ENCODE measurements at regions of chr11 and their contacts with region 1.

Region 1: GRCh38 chr11:71120490-71120896 is 131.9 kb downstream of the SHANK2 start:
- DNase-seq: peak; percentile 84
- ATAC-seq: peak; percentile 98
- H3K4me3 Mint-ChIP-seq: no peak overlapping the region
- H3K27ac Mint-ChIP-seq: peak overlapping the region; percentile 84
- H3K4me1 Mint-ChIP-seq: peaks cover 23% of the 10 kb centered on the region
- H3K27me3 Mint-ChIP-seq: no peaks in the 10 kb centered on the region
- CTCF ChIP-seq: no peak

Region 2: DNA sequence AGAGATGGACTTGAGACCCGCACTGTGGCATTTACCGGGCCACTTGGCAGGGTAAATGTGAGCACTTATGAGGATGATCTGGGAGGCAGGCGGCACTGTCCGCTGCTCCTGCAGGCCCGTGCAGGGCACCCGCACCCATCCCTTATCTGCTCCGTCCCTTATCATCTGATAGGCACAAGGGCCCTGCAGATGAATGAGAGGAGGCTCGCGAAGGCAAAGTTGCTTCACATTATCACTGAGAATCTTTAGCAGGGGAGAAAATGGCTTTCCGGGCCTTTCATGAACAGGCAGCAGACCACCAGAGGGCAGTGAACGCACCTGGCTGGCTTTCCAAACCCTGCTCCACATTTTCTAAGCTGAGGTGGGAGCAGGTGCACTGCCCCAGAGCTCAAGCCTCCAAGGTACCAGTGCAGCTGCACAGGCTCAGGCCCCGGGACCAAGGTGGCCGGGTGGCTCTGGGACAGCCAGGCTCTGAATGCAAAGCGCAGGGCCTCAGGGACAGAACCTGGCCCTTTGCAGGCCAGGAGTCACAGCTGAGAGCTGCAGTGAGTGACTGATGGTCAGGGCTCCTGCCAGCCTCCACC is 33.7 kb before region 1 on chr11:
- CTCF ChIA-PET with region 1: interaction called, 18 read pairs
- POLR2A ChIA-PET with region 1: no interaction called
- DNase-seq: peak; percentile 76
- ATAC-seq: peak; percentile 93
- H3K4me3 Mint-ChIP-seq: no peak overlapping the region
- H3K27ac Mint-ChIP-seq: peak overlapping the region; percentile 45; the same call in 1 of the 2 replicates
- H3K4me1 Mint-ChIP-seq: no peaks in the 10 kb centered on the region
- H3K27me3 Mint-ChIP-seq: no peaks in the 10 kb centered on the region
- CTCF ChIP-seq: no peak; the same call in 1 of the 2 replicates

Region 3: DNA sequence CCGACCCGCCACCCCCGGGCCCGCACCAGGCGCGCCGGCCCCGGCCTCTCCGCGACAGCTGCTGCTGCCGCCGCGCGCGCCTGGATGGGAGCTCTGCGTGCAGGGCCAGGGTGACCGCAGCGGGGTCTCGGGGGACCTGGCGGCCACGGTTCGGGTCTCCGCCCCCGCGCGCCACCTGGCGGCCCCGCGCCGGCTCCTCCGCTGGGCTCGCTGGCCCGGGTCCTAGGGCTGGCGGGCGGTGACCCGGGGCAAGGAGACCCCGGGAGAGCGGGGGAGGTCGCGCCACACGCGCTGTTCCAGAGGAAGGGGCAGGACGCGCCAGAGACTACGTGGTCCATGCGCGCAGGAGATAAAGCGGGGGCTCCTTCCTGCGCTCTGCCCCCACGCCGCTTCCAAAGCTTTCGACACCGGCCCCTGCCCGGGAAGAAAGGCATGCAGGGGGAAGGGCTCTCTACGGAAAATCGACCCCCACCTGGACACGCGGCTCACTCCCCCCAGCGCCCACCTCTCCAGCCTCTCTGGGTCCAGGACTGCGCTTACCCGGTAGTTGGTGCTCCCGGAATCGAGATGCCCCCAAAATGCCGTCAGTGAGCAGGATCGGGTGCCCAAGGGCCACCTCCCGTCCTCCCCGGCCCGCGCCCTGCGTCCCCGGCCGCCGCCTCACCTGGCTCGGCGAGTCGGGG is 131.4 kb after region 1 on chr11:
- CTCF ChIA-PET with region 1: interaction called, 84 read pairs
- POLR2A ChIA-PET with region 1: interaction called, 4 read pairs
- DNase-seq: peak; percentile 72
- ATAC-seq: peak; percentile 25
- H3K4me3 Mint-ChIP-seq: peak overlapping the region; percentile 73
- H3K27ac Mint-ChIP-seq: no peak overlapping the region
- H3K4me1 Mint-ChIP-seq: peaks cover 73% of the 10 kb centered on the region
- H3K27me3 Mint-ChIP-seq: no peaks in the 10 kb centered on the region; the same call in 1 of the 2 replicates
- CTCF ChIP-seq: peak; percentile 47; the same call in 1 of the 2 replicates

Region 4: DNA sequence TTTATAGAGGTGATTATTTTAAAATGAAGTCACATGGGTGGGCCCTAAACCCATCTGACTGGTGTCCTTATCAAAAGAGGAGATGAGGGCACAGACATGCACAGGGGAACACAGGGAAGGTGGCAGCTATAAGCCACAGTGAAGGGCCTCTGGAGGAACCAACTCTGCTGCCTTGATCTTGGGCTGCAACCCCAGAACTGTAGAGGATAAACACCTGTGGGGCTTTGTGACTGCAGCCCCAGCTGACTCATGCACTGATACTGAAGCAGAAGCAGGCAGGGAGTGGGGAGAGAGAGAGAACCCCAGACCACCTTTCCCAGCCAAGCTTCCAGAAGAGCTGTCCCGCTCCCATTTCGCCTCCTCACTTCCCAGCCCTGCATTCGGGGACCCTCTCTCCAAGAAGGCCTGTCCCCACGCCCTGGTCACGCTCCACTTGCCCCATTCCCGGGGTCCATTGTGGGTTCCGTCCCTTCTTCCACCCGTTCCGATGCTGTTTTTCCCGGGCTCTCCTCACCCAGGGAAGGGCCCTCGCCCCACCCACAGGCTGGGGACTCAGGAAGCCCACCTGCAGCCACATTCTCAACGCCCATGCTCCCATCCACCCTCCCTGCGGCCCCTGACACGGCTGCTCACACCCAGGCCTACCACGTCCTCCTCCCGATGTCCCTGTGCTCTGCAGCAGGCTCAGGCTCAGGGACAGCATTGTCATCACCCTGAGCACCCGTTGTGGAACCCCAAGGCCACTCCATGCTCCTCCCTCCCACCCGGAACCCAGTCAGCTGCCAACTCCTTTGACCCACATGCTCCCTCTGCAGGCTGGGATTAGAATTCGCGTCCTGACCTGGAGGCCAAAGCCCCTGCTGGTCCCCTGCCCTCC is 222.7 kb after region 1 on chr11:
- CTCF ChIA-PET with region 1: interaction called, 12 read pairs
- POLR2A ChIA-PET with region 1: no interaction called
- DNase-seq: peak; percentile 84
- ATAC-seq: peak; percentile 93
- H3K4me3 Mint-ChIP-seq: no peak overlapping the region
- H3K27ac Mint-ChIP-seq: no peak overlapping the region
- H3K4me1 Mint-ChIP-seq: peaks cover 12% of the 10 kb centered on the region
- H3K27me3 Mint-ChIP-seq: peaks cover 16% of the 10 kb centered on the region
- CTCF ChIP-seq: peak; percentile 61

Region 5: DNA sequence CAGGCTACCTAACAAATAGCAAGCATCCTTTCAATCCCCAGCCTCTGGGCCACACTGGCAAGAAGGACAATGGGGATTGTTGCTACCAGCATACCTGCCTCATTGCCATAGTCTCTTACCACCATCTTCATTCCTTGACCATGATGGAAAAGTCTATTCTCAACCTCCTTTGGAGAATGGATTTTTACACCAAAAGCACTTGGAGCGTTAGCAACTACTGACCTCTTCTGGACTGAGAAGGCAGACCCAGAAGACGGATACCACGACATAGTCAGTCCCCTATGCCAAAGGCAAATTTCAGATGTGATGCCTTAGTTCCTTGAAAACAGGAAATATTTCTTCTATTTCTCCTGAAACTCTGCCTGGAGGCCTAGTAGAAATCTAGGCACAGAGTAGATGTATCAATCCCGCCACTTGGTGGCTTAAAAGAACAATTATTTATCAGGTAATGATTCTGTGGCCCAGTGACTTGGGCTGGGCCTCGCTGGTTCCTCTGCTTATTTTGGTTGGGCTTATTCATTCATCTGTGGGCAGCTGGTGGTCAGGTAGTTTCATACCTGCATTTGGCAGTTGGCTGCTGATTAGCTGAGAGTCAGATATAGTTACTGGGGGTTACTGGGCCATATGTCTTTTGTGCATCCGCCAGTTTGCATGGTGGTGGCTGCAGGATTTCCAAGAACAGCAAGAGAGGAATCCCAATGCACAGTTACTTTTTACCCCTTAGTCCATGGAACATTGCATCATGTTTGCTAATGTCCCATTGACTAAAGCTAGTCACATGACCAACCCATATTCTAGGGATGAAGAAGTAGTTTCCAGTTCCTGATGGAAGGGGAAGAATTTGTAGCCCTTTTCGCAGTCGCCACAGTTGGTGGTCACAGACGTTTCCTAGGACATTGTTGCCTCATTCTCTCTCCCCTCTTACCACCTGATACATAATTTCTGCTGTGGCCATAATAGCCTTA is 252.5 kb after region 1 on chr11:
- CTCF ChIA-PET with region 1: interaction called, 24 read pairs
- POLR2A ChIA-PET with region 1: no interaction called
- DNase-seq: no peak
- ATAC-seq: peak; percentile 57
- H3K4me3 Mint-ChIP-seq: no peak overlapping the region
- H3K27ac Mint-ChIP-seq: 0 out of 2 replicates have a peak overlapping the region, but pooled peaks have one; percentile 42
- H3K4me1 Mint-ChIP-seq: peaks cover 23% of the 10 kb centered on the region
- H3K27me3 Mint-ChIP-seq: peaks cover 33% of the 10 kb centered on the region
- CTCF ChIP-seq: no peak

Region 6: GRCh38 chr11:71420455-71421241 is 300.2 kb after region 1 on chr11:
- CTCF ChIA-PET with region 1: interaction called, 31 read pairs
- POLR2A ChIA-PET with region 1: no interaction called
- DNase-seq: peak; percentile 74
- ATAC-seq: peak; percentile 83
- H3K4me3 Mint-ChIP-seq: no peak overlapping the region
- H3K27ac Mint-ChIP-seq: no peak overlapping the region
- H3K4me1 Mint-ChIP-seq: no peaks in the 10 kb centered on the region
- H3K27me3 Mint-ChIP-seq: peaks cover 3% of the 10 kb centered on the region; the same call in 1 of the 2 replicates
- CTCF ChIP-seq: peak; percentile 89

Measured in WTC11 (cell line).